A673 (cell line): ENCODE measurements at regions of chr12 and their contacts with region 1.

Region 1: DNA sequence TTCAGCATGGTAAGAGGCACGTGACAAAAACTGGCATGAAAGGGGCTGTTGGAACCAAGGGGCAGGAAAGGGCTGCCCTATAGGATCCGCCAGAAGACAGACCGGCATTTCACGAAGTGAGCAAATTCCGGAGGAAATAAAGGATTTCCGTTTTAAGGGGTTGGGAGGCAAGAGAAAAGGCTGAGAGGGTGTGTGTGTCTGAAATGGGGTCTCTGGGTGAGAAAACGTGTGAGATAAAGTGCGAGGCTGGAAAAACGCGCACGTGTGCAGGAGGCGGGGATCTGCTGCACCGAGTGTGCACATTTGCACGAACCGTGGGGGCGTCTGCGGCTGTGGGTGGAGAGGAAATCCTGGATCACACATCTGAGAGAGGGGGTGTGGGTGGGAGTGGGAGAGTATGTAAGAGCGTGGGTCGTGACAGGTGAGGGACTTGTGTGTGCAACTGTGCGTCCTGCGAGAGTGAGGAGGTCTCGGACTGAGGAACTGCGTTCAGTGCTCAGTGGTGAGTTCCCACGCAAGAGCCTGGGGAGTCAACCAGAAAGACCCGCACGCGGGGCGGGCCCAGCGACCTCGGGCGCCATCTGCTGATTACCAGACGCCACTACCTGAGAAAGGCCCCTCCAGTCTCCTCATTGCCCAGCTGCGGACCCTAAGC is 37.0 kb upstream of the P2RX7 start:
- DNase-seq: peak; percentile 87
- H3K4me3 ChIP-seq: peak overlapping the region; percentile 37
- H3K27ac ChIP-seq: peak overlapping the region; percentile 18
- H3K4me1 ChIP-seq: peaks cover 7% of the 10 kb centered on the region
- H3K27me3 ChIP-seq: no peaks in the 10 kb centered on the region
- CTCF ChIP-seq: peak; percentile 87

Region 2: DNA sequence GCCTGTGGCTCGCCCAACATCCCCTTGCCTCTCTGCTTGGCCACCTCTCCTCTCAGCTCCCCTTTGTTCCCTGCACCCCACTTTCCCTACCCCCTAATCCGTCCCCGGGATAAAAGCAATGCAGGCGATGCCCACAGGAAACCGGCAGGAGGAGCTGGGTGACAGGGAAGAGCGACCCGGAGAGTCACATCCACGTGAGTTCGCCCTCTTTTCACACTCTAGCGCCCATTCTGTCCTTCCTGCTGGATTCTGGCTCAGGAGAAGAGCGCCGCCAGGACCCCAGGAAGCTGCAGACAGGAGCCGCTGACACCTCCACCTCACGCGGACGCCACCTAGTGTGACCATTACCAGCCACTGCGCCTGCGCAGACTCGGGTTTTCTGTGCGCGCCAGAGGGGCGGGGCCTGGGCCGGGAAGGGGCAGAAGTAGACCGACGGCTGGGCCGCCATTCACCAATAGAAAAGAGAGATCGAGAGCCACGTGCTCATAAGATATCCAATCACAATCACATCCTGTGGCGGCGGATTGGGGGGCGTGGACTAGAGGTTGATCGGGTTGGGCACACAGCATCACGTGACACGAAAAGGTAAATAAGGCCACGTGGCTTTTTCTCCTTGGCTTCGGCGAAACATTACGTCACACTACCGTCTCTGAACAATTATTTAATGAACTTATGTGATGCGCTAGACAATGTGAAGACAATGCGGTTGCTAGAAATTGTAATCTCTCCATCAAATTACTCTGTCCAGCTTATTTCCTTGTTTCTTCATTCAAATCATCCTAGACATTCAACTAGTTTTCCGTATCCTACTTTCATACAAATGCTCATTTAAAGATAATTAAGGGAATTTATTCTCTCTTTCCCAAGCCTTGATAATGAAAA is 778.2 kb before region 1 on chr12:
- CTCF ChIA-PET with region 1: no interaction called
- POLR2A ChIA-PET with region 1: no interaction called
- intact Hi-C with region 1: loop called (anchors 10 kb)
- DNase-seq: peak; percentile 100
- H3K4me3 ChIP-seq: peak overlapping the region; percentile 50
- H3K27ac ChIP-seq: peak overlapping the region; percentile 61
- H3K4me1 ChIP-seq: peaks cover 4% of the 10 kb centered on the region
- H3K27me3 ChIP-seq: no peaks in the 10 kb centered on the region
- CTCF ChIP-seq: peak; percentile 77

Region 3: GRCh38 chr12:120580787-120581723 is 514.6 kb before region 1 on chr12 and contains the start of gene POP5:
- CTCF ChIA-PET with region 1: no interaction called
- POLR2A ChIA-PET with region 1: no interaction called
- intact Hi-C with region 1: loop called (anchors 2 kb)
- DNase-seq: peak; percentile 99
- H3K4me3 ChIP-seq: peak within 1 kb of the TSS; percentile 89
- H3K27ac ChIP-seq: peak within 1 kb of the TSS; percentile 59
- H3K4me1 ChIP-seq: peaks cover 10% of the 10 kb centered on the region
- H3K27me3 ChIP-seq: no peaks in the 10 kb centered on the region
- CTCF ChIP-seq: no peak
- total RNA-seq, gene POP5: 41.0 and 42.4 TPM in 2 replicates

Region 4: GRCh38 chr12:120944645-120945231 is 150.9 kb before region 1 on chr12:
- CTCF ChIA-PET with region 1: no interaction called
- POLR2A ChIA-PET with region 1: no interaction called
- intact Hi-C with region 1: loop called (anchors 2 kb)
- DNase-seq: peak; percentile 76
- H3K4me3 ChIP-seq: no peak overlapping the region
- H3K27ac ChIP-seq: no peak overlapping the region
- H3K4me1 ChIP-seq: no peaks in the 10 kb centered on the region
- H3K27me3 ChIP-seq: no peaks in the 10 kb centered on the region
- CTCF ChIP-seq: peak; percentile 78

Region 5: GRCh38 chr12:121005346-121005815 is 90.3 kb before region 1 on chr12:
- CTCF ChIA-PET with region 1: interaction called, 4 read pairs
- POLR2A ChIA-PET with region 1: no interaction called
- intact Hi-C with region 1: loop called (anchors 1 kb)
- DNase-seq: peak; percentile 73
- H3K4me3 ChIP-seq: no peak overlapping the region
- H3K27ac ChIP-seq: no peak overlapping the region
- H3K4me1 ChIP-seq: no peaks in the 10 kb centered on the region
- H3K27me3 ChIP-seq: no peaks in the 10 kb centered on the region
- CTCF ChIP-seq: peak; percentile 87

Region 6: GRCh38 chr12:121060149-121061001 is 35.3 kb before region 1 on chr12:
- CTCF ChIA-PET with region 1: no interaction called
- POLR2A ChIA-PET with region 1: no interaction called
- intact Hi-C with region 1: loop called (anchors 1 kb)
- DNase-seq: peak; percentile 80
- H3K4me3 ChIP-seq: peak overlapping the region; percentile 27
- H3K27ac ChIP-seq: no peak overlapping the region
- H3K4me1 ChIP-seq: no peaks in the 10 kb centered on the region
- H3K27me3 ChIP-seq: no peaks in the 10 kb centered on the region
- CTCF ChIP-seq: peak; percentile 61